MCF 10A (cell line): ENCODE measurements at regions of chr3 and their contacts with region 1.

Region 1: DNA sequence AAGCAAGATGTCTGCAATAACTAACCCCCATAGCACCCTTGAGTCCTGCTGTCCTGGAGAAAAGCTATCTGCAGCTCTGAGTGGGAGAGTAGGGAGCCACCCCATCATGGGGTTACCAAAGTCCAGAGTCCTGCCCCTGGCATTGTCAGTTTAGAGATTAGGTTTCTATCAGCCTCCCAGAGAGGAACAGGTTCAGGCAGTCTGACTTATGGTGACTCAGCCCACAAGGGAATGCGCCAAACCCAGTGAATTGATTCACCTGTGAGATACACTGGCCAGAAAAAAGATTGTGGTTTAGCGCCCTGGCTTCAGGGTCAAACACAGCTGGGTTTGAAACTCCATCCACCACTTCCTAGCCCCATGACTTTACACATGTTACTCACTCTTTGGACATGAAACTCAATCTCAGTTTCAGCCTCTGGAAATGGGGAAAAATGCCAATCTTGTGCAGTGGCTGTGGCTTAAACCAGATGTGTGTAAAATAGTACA is 263.6 kb upstream of the HES1 start:
- DNase-seq: peak; percentile 99
- H3K4me3 Mint-ChIP-seq: no peak overlapping the region
- H3K27ac Mint-ChIP-seq: peak overlapping the region; percentile 27
- H3K4me1 Mint-ChIP-seq: peaks cover 68% of the 10 kb centered on the region
- H3K27me3 Mint-ChIP-seq: peaks cover 12% of the 10 kb centered on the region
- CTCF ChIP-seq: no peak

Region 2: GRCh38 chr3:193857996-193858395 is 14.3 kb before region 1 on chr3:
- CTCF ChIA-PET with region 1: interaction called, 5 read pairs
- POLR2A ChIA-PET with region 1: interaction called, 19 read pairs
- intact Hi-C with region 1: no loop called
- DNase-seq: peak; percentile 96
- H3K4me3 Mint-ChIP-seq: no peak overlapping the region
- H3K27ac Mint-ChIP-seq: no peak overlapping the region
- H3K4me1 Mint-ChIP-seq: peaks cover 26% of the 10 kb centered on the region
- H3K27me3 Mint-ChIP-seq: no peaks in the 10 kb centered on the region
- CTCF ChIP-seq: no peak

Region 3: GRCh38 chr3:194141415-194142155 is 269.3 kb after region 1 on chr3:
- CTCF ChIA-PET with region 1: no interaction called
- POLR2A ChIA-PET with region 1: interaction called, 89 read pairs
- intact Hi-C with region 1: loop called (anchors 1 kb)
- DNase-seq: peak; percentile 97
- H3K4me3 Mint-ChIP-seq: peak overlapping the region; percentile 59
- H3K27ac Mint-ChIP-seq: peak overlapping the region; percentile 94
- H3K4me1 Mint-ChIP-seq: peaks cover 26% of the 10 kb centered on the region
- H3K27me3 Mint-ChIP-seq: no peaks in the 10 kb centered on the region
- CTCF ChIP-seq: no peak